CD8-positive, alpha-beta T cell (primary cell): ENCODE measurements at regions of chr19 and their contacts with region 1.

Region 1: GRCh38 chr19:4803736-4804695 is 12.5 kb downstream of the FEM1A start:
- DNase-seq: peak in 8 of 9 experiments; percentile 43 to 83 (median 70)
- ATAC-seq: peak; percentile 99
- H3K4me3 ChIP-seq: no peak overlapping the region
- H3K4me3 Mint-ChIP-seq: no peak overlapping the region
- H3K27ac ChIP-seq: no peak overlapping the region
- H3K27ac Mint-ChIP-seq: no peak overlapping the region
- H3K4me1 ChIP-seq: no peaks in the 10 kb centered on the region
- H3K4me1 Mint-ChIP-seq: no peaks in the 10 kb centered on the region
- H3K27me3 ChIP-seq: no peaks in the 10 kb centered on the region
- H3K27me3 Mint-ChIP-seq: no peaks in the 10 kb centered on the region
- CTCF ChIP-seq: peak; percentile 67

Region 2: DNA sequence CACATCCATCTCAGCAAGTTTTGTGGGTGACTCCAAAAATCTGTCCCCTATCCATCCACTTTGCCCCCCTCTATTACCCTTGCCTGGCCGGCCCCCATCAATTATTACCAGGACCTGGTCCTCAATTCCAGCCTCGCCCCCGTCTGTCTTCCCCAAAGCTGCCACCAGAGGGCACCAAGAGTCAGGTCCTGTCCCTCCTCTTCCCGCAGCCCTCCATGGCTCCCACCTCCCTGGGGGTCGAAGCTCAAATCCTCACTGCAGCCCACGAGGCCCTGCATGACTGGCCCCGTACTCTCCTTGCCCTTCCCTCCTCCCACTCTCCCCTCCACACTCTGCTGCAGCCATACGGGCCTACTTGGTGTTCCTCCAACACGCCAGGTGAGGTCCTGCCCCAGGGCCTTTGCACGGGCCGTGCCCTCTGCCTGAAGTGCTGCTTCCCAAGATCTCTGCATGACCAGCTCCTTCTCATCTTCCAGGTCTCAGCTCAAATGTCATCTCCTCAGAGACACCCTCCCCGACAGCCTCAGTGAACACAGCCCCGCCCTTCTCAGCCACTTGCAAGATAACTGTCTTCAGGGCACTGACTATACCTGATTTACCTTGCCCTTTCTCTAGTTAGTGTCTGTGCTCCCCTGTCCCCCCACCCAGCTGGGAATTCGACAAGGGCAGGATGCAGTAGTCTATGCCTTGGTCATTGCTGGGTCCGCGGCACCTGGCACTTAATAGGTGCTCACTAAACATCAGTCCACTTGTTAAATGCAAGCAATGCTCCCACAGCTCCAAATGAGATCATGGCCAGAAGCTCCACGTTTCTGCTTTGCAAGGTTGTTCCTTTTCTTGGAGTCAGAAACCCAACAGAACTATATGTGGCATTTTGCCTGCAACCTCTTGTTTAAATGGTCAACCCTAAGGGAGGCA is 227.7 kb before region 1 on chr19:
- CTCF ChIA-PET with region 1: no interaction called
- POLR2A ChIA-PET with region 1: no interaction called
- intact Hi-C with region 1: loop called in 1 of 2 experiments (anchors 5 kb)
- DNase-seq: peak; percentile 39 to 80 (median 66)
- ATAC-seq: peak; percentile 62
- H3K4me3 ChIP-seq: no peak overlapping the region
- H3K4me3 Mint-ChIP-seq: no peak overlapping the region
- H3K27ac ChIP-seq: no peak overlapping the region
- H3K27ac Mint-ChIP-seq: no peak overlapping the region
- H3K4me1 ChIP-seq: no peaks in the 10 kb centered on the region
- H3K4me1 Mint-ChIP-seq: no peaks in the 10 kb centered on the region
- H3K27me3 ChIP-seq: peaks cover 16 to 19% of the 10 kb centered on the region in 2 experiments
- H3K27me3 Mint-ChIP-seq: peaks cover 37% of the 10 kb centered on the region
- CTCF ChIP-seq: peak; percentile 19

Region 3: DNA sequence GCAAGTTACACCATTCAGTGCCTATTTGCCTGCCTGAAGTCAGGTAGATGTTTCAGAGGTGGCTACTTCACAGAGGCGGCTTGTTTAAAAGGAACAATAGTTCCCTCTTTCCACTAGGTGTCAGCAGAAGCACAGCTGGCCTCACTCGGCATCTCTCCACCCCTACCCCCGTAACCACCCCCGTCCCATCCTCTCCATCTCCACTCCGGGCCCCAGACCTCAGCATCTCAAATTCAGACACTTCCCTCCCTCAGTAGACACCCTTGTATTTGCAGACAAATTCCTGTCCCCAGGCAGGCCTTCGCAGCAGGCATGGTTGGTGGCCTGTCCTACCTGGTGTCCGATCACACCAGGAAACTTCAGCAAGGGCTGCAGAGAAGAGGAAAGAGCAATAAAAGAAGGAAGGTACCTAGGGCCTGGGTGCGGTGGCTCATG is 71.3 kb before region 1 on chr19:
- CTCF ChIA-PET with region 1: interaction called, 7 read pairs
- POLR2A ChIA-PET with region 1: no interaction called
- intact Hi-C with region 1: loop called (anchors 1 kb)
- DNase-seq: peak; percentile 12 to 80 (median 47)
- ATAC-seq: peak; percentile 90
- H3K4me3 ChIP-seq: peak overlapping the region in 1 of 2 experiments; percentile 27
- H3K4me3 Mint-ChIP-seq: no peak overlapping the region
- H3K27ac ChIP-seq: no peak overlapping the region
- H3K27ac Mint-ChIP-seq: no peak overlapping the region
- H3K4me1 ChIP-seq: peaks cover 5% of the 10 kb centered on the region
- H3K4me1 Mint-ChIP-seq: peaks cover 4% of the 10 kb centered on the region
- H3K27me3 ChIP-seq: no peaks in the 10 kb centered on the region
- H3K27me3 Mint-ChIP-seq: peaks cover 9% of the 10 kb centered on the region
- CTCF ChIP-seq: peak; percentile 69